Panc1 (cell line): ENCODE measurements at regions of chr6 and their contacts with region 1.

Region 1: DNA sequence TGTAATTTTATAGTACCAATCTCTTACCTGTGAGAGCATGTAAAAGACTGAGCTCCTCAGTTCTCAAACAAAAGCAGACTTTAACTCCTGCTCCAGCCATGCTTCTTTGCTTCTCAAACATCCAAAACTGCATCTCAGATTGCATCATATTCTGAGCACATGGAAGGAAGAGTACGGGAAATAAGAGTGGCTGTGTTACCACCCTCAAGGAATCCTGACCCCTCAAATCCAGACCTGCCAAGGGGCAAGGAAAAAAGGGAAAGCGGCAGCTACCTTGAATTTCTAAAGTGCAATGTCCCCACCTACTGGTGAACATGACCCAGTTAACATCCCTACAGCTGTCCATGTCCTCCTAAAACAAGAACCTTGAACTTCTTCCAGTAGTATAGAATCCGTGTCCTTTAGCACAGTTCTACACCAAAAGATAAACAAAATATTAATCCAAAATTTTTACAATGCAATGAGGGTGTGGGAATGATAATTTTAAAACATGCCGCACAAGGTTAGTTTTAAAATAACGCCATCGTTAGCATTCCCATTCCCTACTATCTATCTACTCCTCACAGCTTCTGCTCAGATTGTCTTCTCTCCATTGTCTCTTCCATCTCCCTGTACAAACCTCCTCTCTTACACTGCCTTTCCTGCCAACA is 34.1 kb upstream of the HLA-DQB1 start:
- DNase-seq: peak; percentile 35
- ATAC-seq: peak; percentile 95
- H3K4me3 ChIP-seq: no peak overlapping the region
- H3K27ac ChIP-seq: no peak overlapping the region
- H3K4me1 ChIP-seq: no peaks in the 10 kb centered on the region
- H3K27me3 ChIP-seq: peaks cover 40% of the 10 kb centered on the region
- CTCF ChIP-seq: peak; percentile 82

Region 2: GRCh38 chr6:32244946-32245398 is 455.5 kb before region 1 on chr6:
- CTCF ChIA-PET with region 1: no interaction called
- POLR2A ChIA-PET with region 1: no interaction called
- in situ Hi-C with region 1: no loop called
- intact Hi-C with region 1: loop called (anchors 10 kb)
- DNase-seq: no peak
- ATAC-seq: peak; percentile 94
- H3K4me3 ChIP-seq: no peak overlapping the region
- H3K27ac ChIP-seq: no peak overlapping the region
- H3K4me1 ChIP-seq: no peaks in the 10 kb centered on the region
- H3K27me3 ChIP-seq: no peaks in the 10 kb centered on the region
- CTCF ChIP-seq: peak; percentile 95

Region 3: DNA sequence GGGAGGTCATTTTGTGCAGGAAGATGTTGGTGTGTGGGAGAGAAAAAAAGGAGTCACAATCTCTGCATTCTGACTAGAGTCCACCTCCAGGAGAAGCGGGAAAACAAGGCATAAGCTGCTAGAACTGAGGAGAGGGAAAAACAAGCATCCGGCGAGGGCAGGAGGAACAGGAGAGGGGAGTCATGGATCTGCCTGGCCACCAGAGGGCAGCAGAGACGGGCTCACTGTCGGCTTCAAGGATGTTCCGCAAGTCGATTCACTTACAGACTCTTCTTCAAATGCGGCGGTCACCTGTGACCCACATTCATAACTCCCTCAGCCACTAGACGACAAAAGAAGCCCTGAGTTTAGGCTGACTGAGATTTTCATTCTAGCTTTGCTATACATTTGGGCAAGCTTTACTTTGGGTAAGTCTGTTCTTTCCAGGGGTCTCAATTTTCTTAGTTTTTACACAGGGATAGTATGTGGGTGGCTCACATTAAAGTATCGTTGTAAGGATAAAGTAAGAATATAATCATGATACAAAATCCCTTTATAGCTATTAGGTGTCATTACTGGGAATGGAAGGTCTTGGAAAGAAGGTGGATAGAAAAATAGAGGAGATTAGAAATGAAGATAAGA is 287.0 kb before region 1 on chr6:
- CTCF ChIA-PET with region 1: interaction called, 10 read pairs
- POLR2A ChIA-PET with region 1: no interaction called
- in situ Hi-C with region 1: no loop called
- intact Hi-C with region 1: no loop called
- DNase-seq: peak; percentile 69
- ATAC-seq: peak; percentile 82
- H3K4me3 ChIP-seq: no peak overlapping the region
- H3K27ac ChIP-seq: no peak overlapping the region
- H3K4me1 ChIP-seq: peaks cover 3% of the 10 kb centered on the region; the same call in 1 of the 2 replicates
- H3K27me3 ChIP-seq: peaks cover 35% of the 10 kb centered on the region
- CTCF ChIP-seq: peak; percentile 96

Region 4: DNA sequence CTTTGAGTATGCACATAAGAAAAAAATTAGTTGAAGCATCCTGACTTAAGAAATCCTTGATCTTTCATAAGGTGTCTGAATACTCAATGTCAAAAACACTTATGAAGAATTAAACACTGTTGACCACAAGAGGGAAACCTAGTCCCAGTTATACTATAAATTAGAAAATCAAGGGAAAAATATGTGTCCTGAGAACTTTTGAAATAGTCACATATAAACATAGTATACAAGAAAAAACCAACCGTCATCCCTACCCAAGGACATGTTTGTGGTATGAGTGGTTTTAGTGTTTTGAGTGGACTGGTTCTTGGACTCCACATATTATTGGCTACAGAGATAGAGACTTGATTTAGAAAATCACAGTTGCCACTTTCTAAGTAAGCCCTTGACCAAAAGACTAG is 268.5 kb before region 1 on chr6:
- CTCF ChIA-PET with region 1: interaction called, 4 read pairs
- POLR2A ChIA-PET with region 1: no interaction called
- in situ Hi-C with region 1: no loop called
- intact Hi-C with region 1: loop called (anchors 1 kb)
- DNase-seq: no peak
- ATAC-seq: no peak
- H3K4me3 ChIP-seq: no peak overlapping the region
- H3K27ac ChIP-seq: no peak overlapping the region
- H3K4me1 ChIP-seq: no peaks in the 10 kb centered on the region
- H3K27me3 ChIP-seq: peaks cover 28% of the 10 kb centered on the region
- CTCF ChIP-seq: peak; percentile 15; the same call in 1 of the 2 replicates

Region 5: DNA sequence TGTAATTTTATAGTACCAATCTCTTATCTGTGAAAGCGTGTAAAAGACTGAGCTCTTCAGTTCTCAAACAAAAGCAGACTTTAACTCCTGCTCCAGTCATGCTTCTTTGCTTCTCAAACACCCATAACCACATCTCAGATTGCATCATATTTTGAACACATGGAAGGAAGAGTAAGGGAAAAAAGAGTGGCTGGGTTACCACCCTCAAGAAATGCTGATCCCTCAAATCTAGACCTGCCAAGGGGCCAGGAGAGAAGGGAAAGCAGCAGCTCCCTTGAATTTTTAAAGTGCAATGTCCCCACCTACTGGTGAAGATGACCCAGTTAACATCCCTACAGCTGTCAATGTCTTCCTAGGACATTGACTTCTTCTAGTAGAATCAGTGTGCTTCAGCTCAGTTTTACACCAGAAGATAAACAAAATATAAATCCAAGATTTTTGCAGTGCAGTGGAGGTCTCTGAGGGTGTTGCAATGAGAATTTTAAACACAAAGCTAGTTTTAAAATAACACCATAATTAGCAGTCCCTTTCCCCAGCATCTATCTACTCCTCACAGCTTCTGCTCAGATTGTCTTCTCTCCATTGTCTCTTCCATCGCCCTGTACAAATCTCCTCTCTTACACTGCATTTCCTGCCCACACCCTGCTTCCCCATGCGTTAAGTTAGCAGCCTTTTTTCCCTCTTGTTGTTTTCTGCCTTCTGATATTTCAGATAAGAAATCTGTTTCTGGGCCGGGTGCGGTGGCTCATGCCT is 85.4 kb after region 1 on chr6:
- CTCF ChIA-PET with region 1: interaction called, 8 read pairs
- POLR2A ChIA-PET with region 1: interaction called, 4 read pairs
- in situ Hi-C with region 1: no loop called
- intact Hi-C with region 1: loop called (anchors 10 kb)
- DNase-seq: peak; percentile 24
- ATAC-seq: peak; percentile 95
- H3K4me3 ChIP-seq: no peak overlapping the region
- H3K27ac ChIP-seq: no peak overlapping the region
- H3K4me1 ChIP-seq: no peaks in the 10 kb centered on the region
- H3K27me3 ChIP-seq: peaks cover 13% of the 10 kb centered on the region
- CTCF ChIP-seq: peak; percentile 74

Region 6: DNA sequence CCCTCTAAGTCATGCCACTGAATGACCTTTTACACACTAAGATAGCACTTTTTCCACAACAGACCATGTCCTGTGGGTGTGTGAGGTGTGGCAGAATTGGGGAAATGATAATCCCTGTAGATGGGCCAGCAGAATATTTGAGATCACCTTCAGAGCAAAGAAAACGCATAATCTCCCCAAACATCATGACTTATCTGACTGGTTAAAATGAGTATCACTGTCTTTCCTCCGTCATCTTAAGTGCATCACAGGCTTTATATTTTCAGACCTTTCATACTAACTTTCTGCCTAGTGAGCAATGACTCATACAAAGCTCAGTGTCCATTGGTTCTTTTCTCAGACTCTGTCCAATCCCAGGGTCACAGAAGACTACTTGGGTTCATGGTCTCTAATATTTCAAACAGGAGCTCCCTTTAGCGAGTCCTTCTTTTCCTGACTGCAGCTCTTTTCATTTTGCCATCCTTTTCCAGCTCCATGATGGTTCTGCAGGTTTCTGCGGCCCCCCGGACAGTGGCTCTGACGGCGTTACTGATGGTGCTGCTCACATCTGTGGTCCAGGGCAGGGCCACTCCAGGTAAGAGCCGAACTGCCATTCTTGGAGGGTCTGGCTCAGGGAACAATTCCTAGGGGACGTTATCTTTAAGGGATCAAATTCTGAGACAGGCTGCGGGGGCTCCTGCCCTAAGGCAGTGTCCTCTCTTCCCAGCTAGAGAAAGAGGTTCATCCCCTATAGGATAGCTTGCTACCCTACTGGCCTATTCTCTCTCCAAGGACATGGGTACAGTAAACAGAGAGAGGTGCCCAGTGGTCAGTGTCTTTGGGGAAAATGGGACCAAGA is 375.3 kb after region 1 on chr6 and contains the start of gene HLA-DPB1:
- CTCF ChIA-PET with region 1: no interaction called
- POLR2A ChIA-PET with region 1: no interaction called
- in situ Hi-C with region 1: no loop called
- intact Hi-C with region 1: no loop called
- DNase-seq: no peak
- ATAC-seq: peak; percentile 74; the same call in 1 of the 2 replicates
- H3K4me3 ChIP-seq: no peak within 1 kb of the TSS
- H3K27ac ChIP-seq: no peak within 1 kb of the TSS
- H3K4me1 ChIP-seq: no peaks in the 10 kb centered on the region
- H3K27me3 ChIP-seq: peaks cover 18% of the 10 kb centered on the region
- CTCF ChIP-seq: no peak
- total RNA-seq, gene HLA-DPB1: 0.64 TPM

Region 7: GRCh38 chr6:33132081-33132524 is 431.6 kb after region 1 on chr6:
- CTCF ChIA-PET with region 1: no interaction called
- POLR2A ChIA-PET with region 1: no interaction called
- in situ Hi-C with region 1: no loop called
- intact Hi-C with region 1: no loop called
- DNase-seq: no peak
- ATAC-seq: no peak
- H3K4me3 ChIP-seq: no peak overlapping the region
- H3K27ac ChIP-seq: no peak overlapping the region
- H3K4me1 ChIP-seq: no peaks in the 10 kb centered on the region
- H3K27me3 ChIP-seq: peaks cover 1% of the 10 kb centered on the region; the same call in 1 of the 2 replicates
- CTCF ChIP-seq: no peak